HepG2 (cell line): ENCODE measurements at regions of chr6 and their contacts with region 1.

Region 1: DNA sequence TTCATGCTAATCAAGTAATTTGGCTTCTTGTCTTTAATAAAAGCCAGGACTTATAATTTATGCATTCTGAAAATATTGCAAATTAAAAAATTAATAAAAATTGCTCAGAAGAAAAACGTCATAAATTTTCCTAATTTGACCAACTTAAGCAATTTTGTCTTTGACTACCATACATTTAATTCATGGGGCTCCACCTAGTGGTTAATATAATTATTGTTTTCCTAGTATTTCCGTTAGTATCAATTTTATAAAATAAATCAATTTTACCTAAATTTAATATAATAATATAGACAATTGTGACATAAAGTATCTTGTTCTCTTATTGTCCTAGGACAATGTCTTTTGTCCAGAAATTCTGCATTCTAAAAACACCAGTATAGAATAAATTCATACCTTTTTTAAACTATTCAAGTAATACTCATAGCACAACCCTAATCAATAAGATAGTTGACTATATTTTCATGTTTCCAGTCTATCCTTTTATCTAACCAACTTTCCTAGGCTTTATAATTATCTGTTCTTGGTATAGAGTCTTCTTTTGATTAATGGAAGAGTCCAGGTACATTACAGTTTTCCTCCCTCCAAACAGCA is 319.9 kb downstream of the TRDN start:
- DNase-seq: peak; percentile 9
- ATAC-seq: no peak
- H3K4me3 ChIP-seq: no peak overlapping the region
- H3K27ac ChIP-seq: no peak overlapping the region
- H3K4me1 ChIP-seq: no peaks in the 10 kb centered on the region
- H3K27me3 ChIP-seq: no peaks in the 10 kb centered on the region
- CTCF ChIP-seq: 0 out of 2 replicates have a peak, but pooled peaks have one; percentile 21
- EP300 ChIP-seq: no peak
- POLR2A ChIP-seq: no peak
- RAD21 ChIP-seq: no peak

Region 2: DNA sequence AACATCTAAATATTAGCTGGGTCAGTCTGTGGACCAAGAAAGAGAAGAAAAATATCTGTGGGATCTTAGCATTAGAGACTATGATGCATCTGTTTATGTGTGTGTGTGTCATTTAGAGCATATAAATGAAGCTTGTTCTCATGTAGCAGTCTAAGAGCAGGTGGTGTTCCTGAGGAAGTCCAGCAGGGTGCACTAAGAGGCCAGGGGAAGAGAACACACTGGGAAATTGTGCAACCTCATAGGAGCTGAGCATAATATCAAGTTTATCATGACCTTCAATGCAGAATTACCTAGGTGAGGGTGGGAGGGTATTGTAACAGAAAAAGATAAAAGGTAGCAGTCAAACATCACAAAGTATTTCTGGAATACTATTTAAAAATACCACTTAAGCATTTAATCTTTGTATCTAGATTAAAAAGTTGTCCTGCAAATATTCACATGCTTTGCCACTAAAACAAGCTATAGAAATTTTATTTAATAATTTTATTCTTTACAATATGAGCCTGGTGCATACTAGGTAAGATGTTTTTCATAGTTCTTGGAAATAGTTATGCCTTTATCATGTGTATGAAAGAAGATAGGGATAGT is 447.3 kb before region 1 on chr6:
- CTCF ChIA-PET with region 1: interaction called, 17 read pairs
- POLR2A ChIA-PET with region 1: no interaction called
- in situ Hi-C with region 1: loop called (anchors 10 kb)
- intact Hi-C with region 1: loop called (anchors 1 kb)
- DNase-seq: peak; percentile 53
- ATAC-seq: peak; percentile 99
- H3K4me3 ChIP-seq: no peak overlapping the region
- H3K27ac ChIP-seq: no peak overlapping the region
- H3K4me1 ChIP-seq: no peaks in the 10 kb centered on the region
- H3K27me3 ChIP-seq: no peaks in the 10 kb centered on the region
- CTCF ChIP-seq: peak; percentile 84
- EP300 ChIP-seq: no peak
- POLR2A ChIP-seq: no peak
- RAD21 ChIP-seq: peak; percentile 84

Region 3: GRCh38 chr6:122947355-122947754 is 369.5 kb before region 1 on chr6:
- CTCF ChIA-PET with region 1: interaction called, 19 read pairs
- POLR2A ChIA-PET with region 1: no interaction called
- in situ Hi-C with region 1: no loop called
- intact Hi-C with region 1: loop called (anchors 1 kb)
- DNase-seq: no peak
- ATAC-seq: peak; percentile 68
- H3K4me3 ChIP-seq: no peak overlapping the region
- H3K27ac ChIP-seq: no peak overlapping the region
- H3K4me1 ChIP-seq: no peaks in the 10 kb centered on the region
- H3K27me3 ChIP-seq: no peaks in the 10 kb centered on the region
- CTCF ChIP-seq: peak; percentile 45
- EP300 ChIP-seq: no peak
- POLR2A ChIP-seq: no peak
- RAD21 ChIP-seq: peak; percentile 56; the same call in 1 of the 2 replicates